ENCODE measurements at regions of chr19 and their contacts with region 1.

Region 1: GRCh38 chr19:35468637-35469036 is 20.6 kb downstream of the FFAR2 start:
- DNase-seq: peak; percentile 84
- CTCF ChIP-seq: peak; percentile 78

Region 2: DNA sequence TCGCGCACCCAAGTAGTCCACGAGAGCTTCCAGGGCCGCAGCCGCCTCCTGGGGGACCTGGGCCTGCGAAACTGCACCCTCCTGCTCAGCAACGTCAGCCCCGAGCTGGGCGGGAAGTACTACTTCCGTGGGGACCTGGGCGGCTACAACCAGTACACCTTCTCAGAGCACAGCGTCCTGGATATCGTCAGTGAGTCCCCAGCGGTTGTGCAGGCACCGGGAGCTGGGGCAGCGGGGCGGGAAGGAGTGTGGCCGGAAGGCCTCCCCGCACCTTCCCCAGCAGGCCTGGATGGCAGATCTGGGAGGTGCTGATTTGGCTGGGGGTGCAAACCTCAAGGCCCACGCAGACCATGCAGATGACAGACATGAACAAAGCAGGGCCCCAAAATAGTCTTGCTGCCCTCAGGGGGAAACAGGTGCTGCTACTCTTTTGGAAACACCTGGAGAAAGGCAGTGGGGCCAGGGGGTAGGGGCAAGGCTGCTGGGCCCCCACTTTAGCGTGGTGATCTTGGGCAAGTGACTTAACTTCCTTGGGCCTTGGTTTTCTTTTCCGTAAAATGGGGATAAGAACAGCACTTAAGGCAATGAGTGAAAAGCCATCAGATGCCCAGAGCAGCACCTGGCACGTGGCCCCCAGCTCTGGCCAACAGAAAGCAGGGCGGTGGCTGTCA is 172.7 kb before region 1 on chr19:
- CTCF ChIA-PET with region 1: no interaction called
- POLR2A ChIA-PET with region 1: no interaction called
- DNase-seq: peak; percentile 80
- CTCF ChIP-seq: no peak

Region 3: DNA sequence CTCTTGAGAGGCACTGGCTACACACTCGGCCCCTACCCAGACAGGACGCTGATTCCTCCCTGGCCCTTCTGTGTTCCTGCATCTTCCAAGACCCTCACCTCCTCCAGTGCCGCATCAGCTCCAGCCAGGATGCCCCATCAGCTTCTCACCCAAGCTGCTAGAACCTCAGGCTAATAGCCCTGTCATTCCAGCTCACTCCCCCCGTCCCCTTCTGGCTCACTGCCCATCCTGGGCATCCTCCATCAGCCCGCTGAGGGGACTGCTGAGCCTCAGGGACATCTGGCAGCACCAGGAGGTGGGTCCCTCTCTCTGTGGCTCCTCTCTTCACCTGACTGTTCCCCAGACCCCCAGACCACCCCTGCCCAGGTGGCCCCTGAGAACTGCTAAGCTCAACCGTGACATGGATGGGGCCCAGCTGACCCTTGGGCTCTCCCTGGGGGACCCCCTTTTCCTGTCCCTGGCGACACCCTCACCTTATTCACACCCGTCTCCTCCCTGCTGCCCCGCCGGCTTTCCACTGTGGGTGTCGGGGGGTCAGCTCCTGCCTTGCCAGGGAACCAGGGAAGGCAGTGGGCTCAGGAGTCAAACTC is 105.5 kb before region 1 on chr19:
- CTCF ChIA-PET with region 1: interaction called, 125 read pairs
- POLR2A ChIA-PET with region 1: no interaction called
- DNase-seq: no peak
- CTCF ChIP-seq: no peak

Region 4: DNA sequence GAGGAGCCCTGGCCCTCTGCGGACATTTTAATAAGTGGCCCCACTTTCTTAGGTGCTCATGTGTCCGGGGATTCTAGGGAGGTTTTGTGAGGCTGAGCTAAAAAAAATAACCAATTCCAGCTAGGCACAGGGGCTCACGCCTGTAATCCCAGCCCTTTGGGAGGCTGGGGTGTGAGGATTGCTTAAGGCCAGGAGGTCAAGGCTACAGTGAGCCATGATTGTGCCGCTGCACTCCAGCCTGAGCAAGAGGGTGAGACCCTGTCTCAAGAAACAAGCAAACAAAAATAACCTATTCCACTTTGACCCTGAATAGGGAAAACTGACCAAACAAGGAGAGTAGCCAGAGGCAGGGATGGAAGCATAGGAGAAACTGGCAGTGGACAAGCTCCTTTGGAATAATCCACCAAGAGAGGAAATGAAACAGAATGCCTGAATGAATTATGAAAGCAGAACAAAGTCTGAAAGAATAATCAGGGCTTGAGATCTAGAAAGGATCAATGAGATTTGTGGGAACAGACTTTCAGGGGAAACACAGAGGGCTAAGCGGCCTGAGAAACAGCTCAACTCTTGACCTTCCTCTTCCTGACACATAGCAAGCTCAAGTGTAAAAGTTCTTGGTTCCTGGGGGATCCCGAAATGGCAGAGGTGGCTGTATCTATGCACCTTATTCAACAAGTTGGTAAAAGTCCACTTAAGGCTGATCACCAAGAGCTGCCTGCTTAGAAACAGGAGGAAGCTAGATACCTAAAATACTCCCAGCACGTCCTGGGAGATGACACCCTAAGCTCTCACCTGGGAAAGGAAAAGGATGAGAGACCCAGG is 50.7 kb before region 1 on chr19:
- CTCF ChIA-PET with region 1: interaction called, 27 read pairs
- POLR2A ChIA-PET with region 1: interaction called, 4 read pairs
- DNase-seq: peak; percentile 67
- CTCF ChIP-seq: no peak

Region 5: GRCh38 chr19:35478803-35479601 is 10.4 kb after region 1 on chr19:
- CTCF ChIA-PET with region 1: interaction called, 12 read pairs
- POLR2A ChIA-PET with region 1: no interaction called
- DNase-seq: no peak
- CTCF ChIP-seq: no peak

Region 6: DNA sequence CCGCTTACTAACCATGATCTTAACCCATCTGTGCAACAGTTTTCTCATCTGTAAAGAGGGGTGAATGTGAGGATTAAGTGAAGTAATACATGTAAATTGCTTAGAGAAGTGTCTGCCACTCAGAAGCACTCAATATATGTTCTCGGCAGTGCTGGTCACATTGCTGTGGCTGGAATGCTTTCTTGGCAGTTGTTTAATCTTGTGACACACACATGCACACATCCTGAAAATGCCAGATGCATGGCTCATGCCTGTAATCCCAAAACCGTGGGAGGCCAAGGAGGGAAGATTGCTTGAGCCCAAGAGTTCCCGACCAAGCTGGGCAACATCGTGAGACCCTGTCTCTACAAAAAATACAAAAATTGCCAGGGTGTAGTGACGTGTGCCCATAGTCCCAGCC is 49.7 kb after region 1 on chr19:
- CTCF ChIA-PET with region 1: no interaction called
- POLR2A ChIA-PET with region 1: no interaction called
- DNase-seq: no peak
- CTCF ChIP-seq: no peak